ENCODE measurements at regions of chr11 and their contacts with region 1.

Region 1: DNA sequence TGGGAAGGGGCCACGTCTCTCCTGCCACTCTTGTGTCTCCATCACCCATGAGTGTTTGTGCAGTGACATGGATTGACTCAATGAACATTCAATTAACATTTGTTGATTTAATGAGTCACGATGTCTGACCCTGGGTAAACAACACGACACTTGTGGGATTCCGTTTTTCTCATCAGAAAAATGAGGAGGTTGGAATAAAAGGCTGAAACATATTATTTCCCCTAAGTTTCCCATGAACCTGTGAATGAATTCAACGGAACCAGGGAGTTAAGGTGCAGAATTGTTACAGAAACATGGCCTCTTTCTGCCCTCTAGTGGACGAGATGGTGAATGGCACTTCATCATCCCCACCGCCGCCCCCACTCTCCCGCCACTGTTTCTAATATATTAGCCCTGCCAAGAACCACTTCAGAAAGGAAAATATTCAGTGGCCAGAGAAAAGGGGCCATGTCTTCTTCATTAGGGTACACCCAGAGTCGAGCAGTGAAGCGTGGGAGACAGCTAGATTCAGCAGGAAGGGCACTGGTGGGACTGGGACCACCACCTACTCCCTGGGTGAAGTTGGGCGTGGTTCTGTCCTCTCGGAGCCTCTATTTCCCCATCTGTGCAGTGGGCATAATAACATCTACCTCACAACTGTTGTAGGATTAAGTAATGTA is 46.3 kb upstream of the SYT13 start:
- DNase-seq: no peak
- ATAC-seq: peak; percentile 73 to 80
- H3K4me3 ChIP-seq: peak overlapping the region; percentile 26
- H3K27ac ChIP-seq: peak overlapping the region; percentile 33
- H3K4me1 ChIP-seq: no peaks in the 10 kb centered on the region
- H3K27me3 ChIP-seq: no peaks in the 10 kb centered on the region

Region 2: GRCh38 chr11:44927174-44927661 is 405.2 kb before region 1 on chr11:
- intact Hi-C with region 1: loop called in 2 of 4 experiments (anchors 5 to 10 kb)
- DNase-seq: peak; percentile 59 to 85 (median 78)
- ATAC-seq: peak; percentile 24 to 36
- H3K4me3 ChIP-seq: no peak overlapping the region
- H3K27ac ChIP-seq: no peak overlapping the region
- H3K4me1 ChIP-seq: peaks cover 3% of the 10 kb centered on the region
- H3K27me3 ChIP-seq: no peaks in the 10 kb centered on the region

Region 3: DNA sequence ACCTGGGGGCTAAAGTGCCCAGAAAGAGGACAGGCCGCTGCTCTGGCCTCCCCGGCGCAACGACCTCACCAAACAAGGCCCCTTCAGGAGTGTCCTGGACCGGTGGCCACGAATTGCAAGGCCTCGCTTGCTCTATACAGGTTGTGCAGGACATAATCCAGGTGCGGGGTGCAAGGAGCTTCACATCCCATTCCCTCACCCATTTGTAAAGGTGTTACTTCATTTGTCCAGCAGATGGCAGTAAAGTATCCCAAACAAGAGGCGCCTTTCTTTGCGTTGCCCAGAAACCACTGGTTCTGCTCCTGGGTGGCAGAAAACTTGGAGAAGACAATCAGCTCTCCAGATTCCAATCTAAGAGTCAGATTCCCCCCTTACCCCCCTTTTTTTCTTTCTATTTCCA is 221.8 kb before region 1 on chr11:
- intact Hi-C with region 1: loop called in 3 of 4 experiments (anchors 2 kb)
- DNase-seq: peak in 1 of 3 donors; percentile 16
- ATAC-seq: peak; percentile 55 to 71
- H3K4me3 ChIP-seq: no peak overlapping the region
- H3K27ac ChIP-seq: no peak overlapping the region
- H3K4me1 ChIP-seq: no peaks in the 10 kb centered on the region
- H3K27me3 ChIP-seq: no peaks in the 10 kb centered on the region

Region 4: GRCh38 chr11:45405916-45406670 is 73.7 kb after region 1 on chr11:
- intact Hi-C with region 1: no loop called
- DNase-seq: no peak
- ATAC-seq: peak in 1 of 2 donors; percentile 14
- H3K4me3 ChIP-seq: no peak overlapping the region
- H3K27ac ChIP-seq: no peak overlapping the region
- H3K4me1 ChIP-seq: no peaks in the 10 kb centered on the region
- H3K27me3 ChIP-seq: no peaks in the 10 kb centered on the region

Measured in right cardiac atrium (tissue), 5 donors.